ENCODE measurements at regions of chr7 and their contacts with region 1.

Region 1: DNA sequence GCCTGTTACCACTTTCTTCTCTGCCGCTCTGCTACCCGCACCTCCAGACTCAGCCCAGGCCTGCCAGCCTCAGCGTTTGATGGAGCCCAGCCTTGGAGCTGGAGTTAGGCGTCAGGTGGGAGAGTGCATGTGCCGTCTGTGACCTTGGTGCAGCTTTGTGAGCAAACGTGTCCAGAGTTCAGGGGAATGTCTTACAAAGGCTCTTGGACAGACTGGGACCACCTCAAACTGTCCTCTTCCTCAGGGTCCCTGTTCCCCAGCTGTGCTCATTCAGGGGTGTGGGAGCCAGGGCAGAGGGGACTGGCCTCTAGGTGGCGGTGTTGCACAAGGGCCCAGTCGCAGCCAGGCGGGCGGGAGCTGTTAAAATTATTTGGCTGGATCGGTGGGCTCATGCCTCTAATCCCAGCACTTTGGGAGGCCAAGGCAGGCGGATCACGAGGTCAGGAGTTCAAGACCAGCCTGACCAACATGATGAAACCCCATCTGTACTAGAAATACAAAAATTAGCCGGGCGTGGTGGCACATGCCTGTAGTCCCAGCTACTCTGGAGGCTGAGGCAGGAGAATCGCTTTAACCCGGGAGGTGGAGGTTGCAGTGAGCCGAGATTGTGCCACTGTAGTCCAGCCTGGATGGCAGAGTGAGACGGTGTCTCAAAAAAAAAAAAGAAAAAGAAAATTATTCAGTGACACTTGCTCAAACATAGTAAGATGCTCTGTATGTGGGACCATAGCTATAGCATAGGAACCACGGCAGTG is 89.2 kb downstream of the ADCY1 start:
- DNase-seq: no peak
- H3K4me3 ChIP-seq: no peak overlapping the region
- CTCF ChIP-seq: peak; percentile 75

Region 2: DNA sequence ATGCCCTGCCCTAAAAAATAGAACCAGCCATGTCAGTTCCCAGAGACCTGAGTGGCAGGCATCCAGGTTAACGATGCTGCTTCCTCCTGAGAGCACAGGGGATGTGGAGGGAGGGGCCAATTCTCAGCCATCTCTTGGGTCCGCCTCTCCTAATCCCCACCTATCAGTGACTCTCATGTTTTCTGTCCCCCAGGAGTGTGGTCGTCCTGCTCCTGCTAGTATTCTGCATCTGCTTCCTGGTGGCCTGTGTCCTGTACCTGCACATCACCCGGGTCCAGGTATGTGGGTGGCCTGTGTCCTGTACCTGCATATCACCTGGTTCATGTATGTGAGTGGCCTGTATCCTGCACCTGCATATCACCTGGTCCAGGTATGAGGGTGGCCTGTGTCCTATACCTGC is 16.2 kb after region 1 on chr7:
- CTCF ChIA-PET with region 1: interaction called, 10 read pairs
- POLR2A ChIA-PET with region 1: no interaction called
- DNase-seq: no peak
- H3K4me3 ChIP-seq: no peak overlapping the region
- CTCF ChIP-seq: no peak

Region 3: DNA sequence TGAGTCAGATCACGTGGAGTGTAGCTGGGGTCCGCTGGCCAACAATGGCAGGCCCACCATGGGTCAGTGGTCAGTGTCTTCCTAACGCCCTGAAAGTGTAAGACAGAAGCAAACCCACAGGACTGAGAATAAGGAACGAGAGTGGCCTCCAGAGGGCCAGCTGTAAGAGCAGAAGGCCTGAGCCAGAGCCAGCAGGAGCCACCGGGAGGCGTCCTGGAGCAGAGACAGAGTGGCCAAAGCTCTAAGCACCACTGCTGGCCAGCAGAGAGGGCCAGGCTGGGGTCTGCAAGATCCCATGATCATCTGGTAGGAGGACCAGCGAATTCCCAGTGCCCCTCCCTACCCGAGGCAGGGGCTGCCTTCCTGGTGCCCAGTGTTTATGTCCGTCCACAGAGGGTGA is 200.4 kb after region 1 on chr7:
- CTCF ChIA-PET with region 1: interaction called, 11 read pairs
- POLR2A ChIA-PET with region 1: no interaction called
- DNase-seq: no peak
- H3K4me3 ChIP-seq: no peak overlapping the region
- CTCF ChIP-seq: peak; percentile 30